HAP-1 (cell line): ENCODE measurements at regions of chr3 and their contacts with region 1.

Region 1: GRCh38 chr3:19866751-19867347 is 67.2 kb downstream of the EFHB start:
- DNase-seq: peak; percentile 50 to 70
- H3K4me3 ChIP-seq: no peak overlapping the region
- H3K4me1 ChIP-seq: no peaks in the 10 kb centered on the region
- H3K27me3 ChIP-seq: 0 out of 2 replicates have a peak, but pooled peaks cover 4% of the 10 kb centered on the region

Region 2: DNA sequence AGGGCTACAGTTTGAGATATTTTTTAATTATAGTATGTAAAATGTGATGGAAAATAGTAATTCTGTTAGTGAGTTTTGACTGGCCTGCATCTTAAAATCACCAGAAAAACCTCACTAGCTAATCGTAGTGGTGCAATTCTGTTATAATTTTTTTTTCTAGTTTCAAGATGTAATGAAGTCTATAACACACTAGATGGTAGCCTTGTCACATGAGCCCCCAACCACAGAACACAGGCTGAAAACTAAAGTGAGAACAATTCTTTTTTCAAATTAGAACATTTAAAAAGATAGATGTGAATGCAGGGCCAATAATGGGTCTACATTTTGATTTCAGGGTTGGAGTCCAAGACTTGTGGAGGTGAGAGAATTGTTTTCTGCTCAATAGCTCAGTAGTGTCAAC is 801.8 kb before region 1 on chr3:
- in situ Hi-C with region 1: loop called (anchors 25 kb)
- DNase-seq: peak in 1 of 2 experiments; percentile 22
- H3K4me3 ChIP-seq: no peak overlapping the region
- H3K4me1 ChIP-seq: no peaks in the 10 kb centered on the region
- H3K27me3 ChIP-seq: no peaks in the 10 kb centered on the region

Region 3: GRCh38 chr3:19348929-19349564 is 517.8 kb before region 1 on chr3:
- in situ Hi-C with region 1: loop called (anchors 25 kb)
- DNase-seq: peak; percentile 15 to 41
- H3K4me3 ChIP-seq: no peak overlapping the region
- H3K4me1 ChIP-seq: peaks cover 10% of the 10 kb centered on the region
- H3K27me3 ChIP-seq: no peaks in the 10 kb centered on the region

Region 4: DNA sequence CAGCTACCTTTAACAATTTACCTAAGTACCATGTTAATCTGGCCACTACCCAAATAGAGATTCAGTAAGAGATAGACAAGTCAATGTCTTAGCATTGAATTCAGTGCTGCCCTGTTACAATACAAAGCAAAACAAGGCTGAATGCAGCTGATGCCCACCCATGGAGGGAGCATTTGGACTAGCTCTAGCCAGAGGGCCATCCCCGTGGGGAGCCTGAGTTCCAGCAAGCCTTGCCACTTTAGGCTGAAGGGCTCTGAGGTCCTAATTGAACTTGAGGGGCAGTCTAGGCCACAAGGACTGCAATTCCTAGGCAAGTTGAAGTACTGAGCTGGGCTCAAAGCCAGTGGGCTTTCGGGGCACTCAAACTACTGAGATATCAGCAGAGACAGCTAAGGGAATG is 198.7 kb before region 1 on chr3:
- in situ Hi-C with region 1: no loop called
- DNase-seq: no peak
- H3K4me3 ChIP-seq: no peak overlapping the region
- H3K4me1 ChIP-seq: no peaks in the 10 kb centered on the region
- H3K27me3 ChIP-seq: no peaks in the 10 kb centered on the region

Region 5: DNA sequence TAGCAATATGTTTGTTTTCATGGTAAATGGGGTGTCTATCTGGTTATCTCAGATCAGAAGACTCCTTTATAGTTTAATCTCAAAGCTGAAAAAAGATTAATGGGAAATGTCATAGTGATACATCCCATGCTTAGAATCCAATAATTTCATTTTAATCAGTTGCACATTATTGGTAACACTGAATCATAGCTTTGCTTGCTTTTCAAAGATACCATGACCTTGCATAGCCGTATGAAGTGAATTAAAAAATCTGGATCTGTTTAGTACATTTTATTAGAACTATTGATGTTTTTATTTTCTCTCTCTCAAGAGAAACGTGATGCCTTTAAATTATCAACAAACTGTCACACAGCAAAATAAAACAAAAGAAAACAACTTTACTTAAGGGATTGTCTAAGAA is 825.8 kb after region 1 on chr3:
- in situ Hi-C with region 1: no loop called
- DNase-seq: no peak
- H3K4me3 ChIP-seq: no peak overlapping the region
- H3K4me1 ChIP-seq: no peaks in the 10 kb centered on the region
- H3K27me3 ChIP-seq: no peaks in the 10 kb centered on the region